T-cell (primary cell): ENCODE measurements at regions of chr7 and their contacts with region 1.

Region 1: GRCh38 chr7:152354066-152354465 is 81.7 kb downstream of the KMT2C start:
- DNase-seq: no peak
- ATAC-seq: no peak
- H3K4me3 ChIP-seq: no peak overlapping the region
- H3K4me3 Mint-ChIP-seq: no peak overlapping the region
- H3K27ac ChIP-seq: no peak overlapping the region
- H3K27ac Mint-ChIP-seq: no peak overlapping the region
- H3K4me1 ChIP-seq: no peaks in the 10 kb centered on the region
- H3K4me1 Mint-ChIP-seq: peaks cover 12 to 25% (median 24%) of the 10 kb centered on the region in 3 donors
- H3K27me3 ChIP-seq: no peaks in the 10 kb centered on the region
- H3K27me3 Mint-ChIP-seq: no peaks in the 10 kb centered on the region

Region 2: GRCh38 chr7:152590481-152590880 is 236.4 kb after region 1 on chr7:
- CTCF ChIA-PET with region 1: interaction called in 1 of 2 experiments, 11 read pairs
- POLR2A ChIA-PET with region 1: no interaction called
- DNase-seq: no peak
- ATAC-seq: no peak
- H3K4me3 ChIP-seq: no peak overlapping the region
- H3K4me3 Mint-ChIP-seq: no peak overlapping the region
- H3K27ac ChIP-seq: no peak overlapping the region
- H3K27ac Mint-ChIP-seq: no peak overlapping the region
- H3K4me1 ChIP-seq: no peaks in the 10 kb centered on the region
- H3K4me1 Mint-ChIP-seq: no peaks in the 10 kb centered on the region
- H3K27me3 ChIP-seq: peaks cover 0 to 3% of the 10 kb centered on the region in 2 experiments
- H3K27me3 Mint-ChIP-seq: no peaks in the 10 kb centered on the region

Region 3: DNA sequence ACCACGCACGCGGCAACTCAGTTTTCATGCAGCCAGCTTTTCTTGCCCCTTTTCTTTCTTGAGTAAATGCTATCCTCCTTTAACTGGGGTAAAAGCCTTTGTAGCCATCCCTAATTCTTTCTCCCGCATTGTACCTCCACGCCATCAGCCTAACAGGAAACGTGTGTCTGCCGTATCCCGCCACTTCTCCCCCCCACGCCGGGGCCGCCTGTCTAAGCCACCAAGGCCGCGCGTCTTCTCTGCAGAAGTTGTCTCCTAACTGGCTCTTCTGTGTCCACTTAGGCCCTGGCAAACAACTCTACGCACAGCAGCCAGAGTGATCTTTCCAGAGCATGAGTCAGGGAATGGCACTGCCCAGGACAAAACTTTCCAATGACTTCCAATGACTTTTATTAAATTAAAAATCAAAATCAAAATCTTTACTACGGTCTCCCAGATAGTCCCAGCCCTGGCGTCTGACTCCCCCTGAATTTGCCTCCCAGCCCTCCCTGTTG is 247.3 kb after region 1 on chr7:
- CTCF ChIA-PET with region 1: no interaction called
- POLR2A ChIA-PET with region 1: no interaction called
- DNase-seq: no peak
- ATAC-seq: no peak
- H3K4me3 ChIP-seq: no peak overlapping the region
- H3K4me3 Mint-ChIP-seq: no peak overlapping the region
- H3K27ac ChIP-seq: no peak overlapping the region
- H3K27ac Mint-ChIP-seq: no peak overlapping the region
- H3K4me1 ChIP-seq: no peaks in the 10 kb centered on the region
- H3K4me1 Mint-ChIP-seq: no peaks in the 10 kb centered on the region
- H3K27me3 ChIP-seq: no peaks in the 10 kb centered on the region
- H3K27me3 Mint-ChIP-seq: no peaks in the 10 kb centered on the region